ENCODE measurements at regions of chr20 and their contacts with region 1.

Region 1: GRCh38 chr20:45318948-45319347 is 10.8 kb upstream of the MATN4 start:
- DNase-seq: no peak
- H3K4me3 ChIP-seq: no peak overlapping the region
- H3K27ac ChIP-seq: no peak overlapping the region
- H3K4me1 ChIP-seq: no peaks in the 10 kb centered on the region
- H3K27me3 ChIP-seq: peaks cover 13% of the 10 kb centered on the region
- CTCF ChIP-seq: no peak
- POLR2A ChIP-seq: no peak

Region 2: DNA sequence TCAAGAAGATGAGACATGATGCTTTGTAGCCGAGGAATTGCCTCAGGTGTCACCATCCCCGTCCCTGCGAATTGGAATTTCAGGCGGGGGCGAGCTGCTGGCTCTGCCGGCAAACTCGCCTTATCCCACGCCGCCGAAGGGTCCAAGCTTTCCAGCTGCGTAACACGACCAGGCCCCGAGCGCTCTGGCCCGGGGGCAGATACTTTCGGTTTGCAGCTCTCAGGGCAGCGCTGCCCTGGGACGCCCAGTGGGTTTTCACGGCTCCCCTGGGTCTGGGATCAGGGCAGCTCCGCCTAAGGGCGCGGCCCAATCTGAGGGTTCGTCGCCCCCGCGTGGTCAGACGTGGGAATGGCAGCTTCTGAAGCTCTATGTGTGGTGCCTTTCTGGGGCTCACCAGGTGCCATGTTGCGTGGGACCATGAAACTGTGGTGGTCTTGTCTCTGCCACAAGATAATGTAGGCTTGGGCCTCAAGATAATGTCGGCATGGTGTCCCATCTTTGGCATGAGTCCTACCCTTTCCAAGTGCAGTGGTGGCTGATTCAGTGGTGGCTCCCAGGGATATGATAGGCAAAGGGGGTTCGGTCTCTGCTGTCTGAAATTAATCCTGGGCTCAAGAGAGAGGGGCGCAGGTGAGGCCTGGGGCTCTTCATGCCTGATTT is 117.9 kb after region 1 on chr20:
- intact Hi-C with region 1: loop called (anchors 5 kb)
- DNase-seq: peak; percentile 88 to 96 (median 91)
- H3K4me3 ChIP-seq: peak overlapping the region; percentile 7 to 69 (median 42)
- H3K27ac ChIP-seq: peak overlapping the region in 3 of 5 donors; percentile 64 to 82 (median 75)
- H3K4me1 ChIP-seq: no peaks in the 10 kb centered on the region
- H3K27me3 ChIP-seq: no peaks in the 10 kb centered on the region
- CTCF ChIP-seq: peak; percentile 85 to 98 (median 96)
- POLR2A ChIP-seq: peak in 1 of 2 donors; percentile 18

Region 3: GRCh38 chr20:45779011-45779915 is 460.3 kb after region 1 on chr20:
- intact Hi-C with region 1: loop called (anchors 5 to 10 kb)
- DNase-seq: peak; percentile 72 to 92 (median 86)
- H3K4me3 ChIP-seq: no peak overlapping the region
- H3K27ac ChIP-seq: peak overlapping the region; percentile 46 to 82 (median 58)
- H3K4me1 ChIP-seq: peaks cover 7 to 21% of the 10 kb centered on the region in 2 donors
- H3K27me3 ChIP-seq: no peaks in the 10 kb centered on the region
- CTCF ChIP-seq: no peak
- POLR2A ChIP-seq: no peak